ENCODE measurements at regions of chr5 and their contacts with region 1.

Region 1: GRCh38 chr5:58944221-58944620 is 361.3 kb downstream of the RAB3C start:
- DNase-seq: no peak
- ATAC-seq: no peak

Region 2: DNA sequence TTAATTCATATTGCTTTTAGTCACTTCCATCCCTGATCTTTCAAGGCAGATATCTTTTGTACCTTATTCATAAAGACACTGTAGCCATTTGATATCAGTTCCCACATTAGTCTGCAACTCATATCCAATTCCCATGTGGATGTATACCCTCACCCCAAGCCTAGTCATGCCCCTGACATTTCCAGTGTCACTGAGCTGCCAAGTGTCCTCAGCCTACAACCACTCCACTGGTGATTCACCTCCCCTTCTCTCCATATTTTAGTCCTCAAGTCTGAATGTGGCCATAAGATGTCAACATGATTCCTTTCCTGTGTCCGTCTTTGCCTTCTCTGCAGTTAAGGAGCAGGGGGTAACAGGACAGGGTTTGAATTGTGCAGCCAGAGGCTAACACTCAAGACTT is 14.5 kb before region 1 on chr5:
- intact Hi-C with region 1: loop called (anchors 2 kb)
- DNase-seq: no peak
- ATAC-seq: no peak

Measured in Right ventricle myocardium inferior (tissue), 1 donor.